ENCODE measurements at regions of chr10 and their contacts with region 1.

Region 1: DNA sequence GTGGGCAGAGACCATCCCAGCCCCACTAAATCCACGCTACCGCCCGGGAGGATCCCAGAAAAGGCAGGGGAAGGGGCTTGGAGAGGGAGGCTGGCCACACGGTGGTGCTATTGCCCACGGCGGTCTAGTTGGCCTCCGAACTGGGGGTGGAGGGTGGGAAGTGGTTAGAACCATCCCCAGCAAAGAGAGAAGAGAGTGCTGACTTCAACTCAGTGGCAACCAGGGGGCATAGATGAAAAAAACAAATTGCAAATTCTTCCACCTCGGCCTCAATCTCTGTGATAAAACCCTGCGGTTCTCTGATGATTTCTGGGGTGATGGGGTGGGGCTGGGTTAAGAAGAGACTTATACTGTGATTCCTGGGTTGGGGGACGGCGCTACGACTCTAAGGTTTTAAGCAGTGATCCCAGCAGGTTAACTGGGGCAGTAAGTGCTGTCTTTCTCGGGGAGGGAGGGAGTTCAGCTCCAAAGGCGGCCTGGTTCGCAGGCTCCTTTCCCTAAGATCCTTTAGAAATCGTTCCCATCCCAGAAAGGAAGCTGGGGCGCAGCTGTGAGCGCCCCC is 154.5 kb upstream of the LYZL2 start:
- DNase-seq: peak; percentile 88
- H3K4me3 Mint-ChIP-seq: peak overlapping the region; percentile 73
- H3K27ac Mint-ChIP-seq: peak overlapping the region; percentile 79
- H3K4me1 Mint-ChIP-seq: peaks cover 33% of the 10 kb centered on the region
- H3K27me3 Mint-ChIP-seq: peaks cover 4% of the 10 kb centered on the region

Region 2: GRCh38 chr10:30687698-30688219 is 96.3 kb before region 1 on chr10:
- CTCF ChIA-PET with region 1: interaction called, 13 read pairs
- POLR2A ChIA-PET with region 1: no interaction called
- DNase-seq: peak; percentile 85
- H3K4me3 Mint-ChIP-seq: no peak overlapping the region
- H3K27ac Mint-ChIP-seq: peak overlapping the region; percentile 67
- H3K4me1 Mint-ChIP-seq: peaks cover 79% of the 10 kb centered on the region
- H3K27me3 Mint-ChIP-seq: no peaks in the 10 kb centered on the region

Region 3: DNA sequence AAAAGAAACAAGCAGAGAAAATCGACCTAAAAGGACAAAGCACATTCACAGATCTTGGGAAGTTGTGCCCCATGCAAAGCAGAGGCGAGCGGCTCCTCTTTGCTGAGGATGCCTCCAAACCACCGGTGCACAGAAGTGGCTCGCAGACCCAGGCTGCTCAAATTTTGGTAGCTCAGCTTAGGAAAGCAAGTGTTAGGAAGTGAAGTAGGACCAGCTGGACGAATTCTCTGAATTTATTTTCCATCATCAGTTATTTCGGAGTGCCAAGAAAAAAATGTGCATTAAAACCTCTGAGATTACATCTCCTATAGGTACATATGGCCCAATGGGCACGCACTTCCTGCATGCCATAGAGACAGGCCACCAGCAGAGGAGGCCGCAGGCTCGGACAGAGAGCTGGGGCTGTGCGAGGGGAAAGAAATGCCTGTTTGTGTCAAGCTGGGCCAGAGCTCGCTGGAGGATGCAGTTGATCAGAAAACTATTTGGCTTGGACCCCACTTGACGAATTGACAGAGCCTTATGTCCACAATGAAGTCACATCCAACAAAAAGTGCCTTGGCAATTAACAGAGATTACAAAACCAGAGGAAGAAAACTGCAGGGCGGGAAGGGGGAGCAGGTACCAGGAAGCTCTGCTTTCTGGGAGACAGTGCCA is 32.2 kb before region 1 on chr10:
- CTCF ChIA-PET with region 1: interaction called, 12 read pairs
- POLR2A ChIA-PET with region 1: no interaction called
- DNase-seq: peak; percentile 80
- H3K4me3 Mint-ChIP-seq: peak overlapping the region; percentile 9
- H3K27ac Mint-ChIP-seq: peak overlapping the region; percentile 80
- H3K4me1 Mint-ChIP-seq: peaks cover 52% of the 10 kb centered on the region
- H3K27me3 Mint-ChIP-seq: no peaks in the 10 kb centered on the region

Region 4: GRCh38 chr10:30800368-30800767 is 16.3 kb after region 1 on chr10:
- CTCF ChIA-PET with region 1: no interaction called
- POLR2A ChIA-PET with region 1: no interaction called
- DNase-seq: no peak
- H3K4me3 Mint-ChIP-seq: no peak overlapping the region
- H3K27ac Mint-ChIP-seq: no peak overlapping the region
- H3K4me1 Mint-ChIP-seq: no peaks in the 10 kb centered on the region
- H3K27me3 Mint-ChIP-seq: no peaks in the 10 kb centered on the region

Region 5: DNA sequence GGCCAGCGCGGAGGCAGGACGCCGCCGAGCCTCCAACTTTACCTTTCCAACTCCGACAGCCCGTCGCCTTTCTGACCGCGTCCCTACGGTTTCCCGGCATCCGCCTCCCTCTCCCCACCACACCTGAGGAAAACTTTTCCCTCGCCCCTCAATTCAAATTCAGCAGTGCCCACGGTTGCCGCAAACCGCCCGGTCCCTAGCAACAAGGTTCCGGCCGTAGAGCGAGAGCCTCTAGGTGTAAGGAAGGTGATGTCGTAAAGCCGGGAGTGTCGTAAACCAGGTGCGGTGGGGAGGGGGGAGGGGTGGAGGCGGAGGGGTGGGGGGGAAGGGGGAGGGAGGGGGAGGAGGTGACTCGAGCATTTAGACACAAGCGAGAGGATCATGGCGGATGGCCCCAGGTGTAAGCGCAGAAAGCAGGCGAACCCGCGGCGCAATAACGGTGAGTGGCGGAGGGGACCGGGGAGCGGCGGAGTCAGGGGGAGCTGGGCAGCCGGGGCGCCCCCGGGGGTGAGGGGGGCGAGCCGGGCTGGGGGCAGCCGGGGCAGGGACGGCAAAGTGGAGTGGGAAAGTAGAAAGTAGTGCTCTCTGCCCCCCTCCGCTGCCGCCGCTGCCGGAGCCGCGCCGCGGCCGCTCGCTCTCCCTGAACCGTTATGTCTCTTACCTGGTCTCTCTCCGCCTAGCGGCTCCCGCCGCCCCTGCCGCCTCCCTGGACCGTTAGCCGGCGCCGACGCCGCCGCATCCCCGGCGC is 535.0 kb after region 1 on chr10 and contains the start of gene ZEB1:
- CTCF ChIA-PET with region 1: interaction called, 5 read pairs
- POLR2A ChIA-PET with region 1: interaction called, 17 read pairs
- DNase-seq: peak; percentile 93
- H3K4me3 Mint-ChIP-seq: peak within 1 kb of the TSS; percentile 93
- H3K27ac Mint-ChIP-seq: peak within 1 kb of the TSS; percentile 97
- H3K4me1 Mint-ChIP-seq: peaks cover 49% of the 10 kb centered on the region
- H3K27me3 Mint-ChIP-seq: no peaks in the 10 kb centered on the region
- total RNA-seq, gene ZEB1: 50.4 to 51.6 TPM

Region 6: GRCh38 chr10:31490858-31491504 is 707.0 kb after region 1 on chr10:
- CTCF ChIA-PET with region 1: interaction called, 14 read pairs
- POLR2A ChIA-PET with region 1: interaction called, 6 read pairs
- DNase-seq: peak; percentile 15
- H3K4me3 Mint-ChIP-seq: no peak overlapping the region
- H3K27ac Mint-ChIP-seq: no peak overlapping the region
- H3K4me1 Mint-ChIP-seq: peaks cover 3% of the 10 kb centered on the region
- H3K27me3 Mint-ChIP-seq: no peaks in the 10 kb centered on the region

Region 7: DNA sequence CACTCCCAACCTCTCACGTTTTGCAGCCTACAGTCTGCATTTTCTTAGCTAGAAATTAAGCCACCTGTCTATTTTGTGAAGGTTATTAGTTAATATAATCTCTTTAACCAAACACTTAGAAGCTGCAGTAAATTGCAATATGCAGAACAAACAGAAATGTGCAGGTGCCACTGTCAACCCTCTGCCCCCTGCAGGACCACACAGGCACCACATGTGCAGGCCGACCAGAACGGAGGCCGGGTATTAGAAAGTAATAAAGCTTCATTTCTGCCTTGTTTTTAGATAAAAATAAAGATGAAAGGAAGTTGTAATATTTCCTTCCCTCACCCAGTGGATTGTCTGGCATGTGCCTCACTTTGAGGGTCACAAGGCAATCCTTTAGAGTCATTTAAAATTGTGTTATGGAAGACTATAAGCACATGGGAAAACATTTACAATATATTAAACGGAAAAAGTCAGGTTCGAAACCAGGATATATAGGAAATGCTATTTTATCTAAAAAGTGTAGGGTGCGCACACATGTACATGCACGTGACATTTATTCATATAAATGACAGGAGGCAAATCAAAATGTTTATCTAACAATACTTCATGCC is 986.4 kb after region 1 on chr10:
- CTCF ChIA-PET with region 1: interaction called, 18 read pairs
- POLR2A ChIA-PET with region 1: no interaction called
- DNase-seq: peak; percentile 63
- H3K4me3 Mint-ChIP-seq: no peak overlapping the region
- H3K27ac Mint-ChIP-seq: no peak overlapping the region
- H3K4me1 Mint-ChIP-seq: no peaks in the 10 kb centered on the region
- H3K27me3 Mint-ChIP-seq: no peaks in the 10 kb centered on the region

Region 8: GRCh38 chr10:31808258-31809218 is 1024.5 kb after region 1 on chr10:
- CTCF ChIA-PET with region 1: interaction called, 29 read pairs
- POLR2A ChIA-PET with region 1: interaction called, 3 read pairs
- DNase-seq: peak; percentile 30
- H3K4me3 Mint-ChIP-seq: peak overlapping the region; percentile 65
- H3K27ac Mint-ChIP-seq: peak overlapping the region; percentile 76
- H3K4me1 Mint-ChIP-seq: peaks cover 7% of the 10 kb centered on the region
- H3K27me3 Mint-ChIP-seq: no peaks in the 10 kb centered on the region